H1 (cell line): ENCODE measurements at regions of chr11 and their contacts with region 1.

Region 1: DNA sequence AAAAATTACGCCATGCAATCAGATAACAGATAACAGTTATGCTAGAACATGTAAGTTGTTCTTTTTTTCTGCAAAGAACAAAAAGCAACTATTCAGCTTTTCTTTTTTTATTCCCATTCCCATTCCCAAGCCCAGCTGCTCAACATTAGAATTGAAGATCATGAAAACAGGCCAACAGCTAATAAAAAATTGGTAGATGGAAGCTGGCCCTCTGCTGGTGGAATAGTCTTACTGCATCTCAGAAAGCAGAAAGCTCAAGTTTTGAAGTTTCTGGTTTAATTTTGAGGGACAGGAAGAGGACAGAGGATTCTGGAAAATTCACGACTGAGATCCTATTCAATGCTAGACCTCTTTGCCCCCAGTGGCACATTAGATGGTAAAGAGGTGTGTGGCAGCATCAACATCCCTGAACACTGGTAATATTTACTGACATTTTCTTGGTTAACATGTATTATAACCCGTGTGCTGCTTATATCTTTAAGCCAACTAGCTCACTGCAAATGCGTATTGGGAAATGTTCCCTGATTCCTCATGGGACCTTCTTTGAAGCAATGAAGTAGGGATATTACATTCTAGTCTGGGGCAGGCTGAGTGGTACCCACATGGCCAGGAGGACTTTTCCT is 591.2 kb downstream of the OPCML start:
- DNase-seq: no peak
- H3K4me3 ChIP-seq: no peak overlapping the region
- H3K27ac ChIP-seq: no peak overlapping the region
- H3K4me1 ChIP-seq: peaks cover 3 to 7% (median 4%) of the 10 kb centered on the region in 4 experiments; a peak in 6 of 7 replicates
- H3K27me3 ChIP-seq: peaks cover 0 to 33% (median 26%) of the 10 kb centered on the region in 4 experiments; a peak in 6 of 7 replicates
- CTCF ChIP-seq: peak in 2 of 3 experiments; percentile 70 to 71; a peak in 3 of 4 replicates
- EP300 ChIP-seq: no peak
- POLR2A ChIP-seq: no peak
- RAD21 ChIP-seq: peak; percentile 76 to 84

Region 2: GRCh38 chr11:132901638-132902546 is 39.2 kb before region 1 on chr11:
- CTCF ChIA-PET with region 1: interaction called, 18 read pairs
- POLR2A ChIA-PET with region 1: no interaction called
- DNase-seq: no peak
- H3K4me3 ChIP-seq: no peak overlapping the region
- H3K27ac ChIP-seq: no peak overlapping the region
- H3K4me1 ChIP-seq: peaks cover 2 to 14% (median 9%) of the 10 kb centered on the region in 4 experiments; a peak in 6 of 7 replicates
- H3K27me3 ChIP-seq: no peaks in the 10 kb centered on the region
- CTCF ChIP-seq: no peak
- EP300 ChIP-seq: no peak
- POLR2A ChIP-seq: no peak
- RAD21 ChIP-seq: no peak

Region 3: GRCh38 chr11:132962041-132962440 is 20.9 kb after region 1 on chr11:
- CTCF ChIA-PET with region 1: interaction called, 20 read pairs
- POLR2A ChIA-PET with region 1: no interaction called
- DNase-seq: no peak
- H3K4me3 ChIP-seq: no peak overlapping the region
- H3K27ac ChIP-seq: no peak overlapping the region
- H3K4me1 ChIP-seq: peaks cover 1 to 12% (median 5%) of the 10 kb centered on the region in 4 experiments; a peak in 5 of 7 replicates
- H3K27me3 ChIP-seq: no peaks in the 10 kb centered on the region; a peak in 1 of 7 replicates
- CTCF ChIP-seq: no peak
- EP300 ChIP-seq: no peak
- POLR2A ChIP-seq: no peak
- RAD21 ChIP-seq: no peak

Region 4: DNA sequence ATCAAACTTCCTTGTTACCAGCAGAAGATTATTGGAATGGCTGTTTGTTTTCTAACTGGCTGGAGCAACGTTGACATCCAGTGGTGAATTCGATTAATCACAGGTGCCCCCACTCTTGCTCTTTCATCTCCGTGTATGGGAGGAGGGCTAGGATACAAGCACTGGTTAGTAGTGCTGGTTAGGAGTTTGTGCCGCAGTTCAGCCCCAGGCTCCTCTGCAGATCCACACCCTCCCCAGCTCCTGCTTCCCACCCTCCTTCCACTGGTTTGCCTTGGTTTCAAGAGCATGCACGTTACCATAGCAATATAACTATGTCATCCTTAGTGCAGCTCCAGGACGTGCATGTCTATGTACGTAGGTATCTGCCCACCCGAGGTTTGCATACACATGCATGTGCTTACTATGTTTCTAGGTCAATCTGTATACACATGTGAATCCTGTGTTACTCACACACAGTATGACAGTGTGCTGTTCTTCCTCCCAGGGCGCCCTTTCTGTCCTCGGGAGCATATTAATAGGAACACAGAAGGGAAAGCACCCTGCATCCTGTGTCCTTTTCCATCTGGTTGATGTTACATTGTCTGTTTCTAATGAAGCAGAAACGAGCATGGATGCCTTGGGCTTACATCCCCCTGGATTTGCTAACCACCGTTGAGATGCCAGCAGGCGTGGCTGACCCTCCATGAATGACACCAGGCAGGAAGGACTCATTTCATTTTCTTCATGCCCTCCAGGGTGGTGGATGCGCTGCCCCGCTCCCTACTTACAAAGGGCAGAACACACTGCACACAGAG is 51.9 kb after region 1 on chr11:
- CTCF ChIA-PET with region 1: interaction called, 12 read pairs
- POLR2A ChIA-PET with region 1: no interaction called
- DNase-seq: no peak
- H3K4me3 ChIP-seq: no peak overlapping the region
- H3K27ac ChIP-seq: no peak overlapping the region
- H3K4me1 ChIP-seq: peaks cover 0 to 8% (median 4%) of the 10 kb centered on the region in 4 experiments; a peak in 3 of 7 replicates
- H3K27me3 ChIP-seq: peaks cover 5 to 35% (median 30%) of the 10 kb centered on the region in 4 experiments
- CTCF ChIP-seq: peak in 2 of 3 experiments; percentile 42 to 52; a peak in 2 of 4 replicates
- EP300 ChIP-seq: no peak
- POLR2A ChIP-seq: no peak
- RAD21 ChIP-seq: peak; percentile 72 to 81

Region 5: GRCh38 chr11:133064152-133064877 is 123.2 kb after region 1 on chr11:
- CTCF ChIA-PET with region 1: interaction called, 131 read pairs
- POLR2A ChIA-PET with region 1: no interaction called
- DNase-seq: peak; percentile 67 to 88
- H3K4me3 ChIP-seq: peak overlapping the region; percentile 55 to 64 (median 61)
- H3K27ac ChIP-seq: no peak overlapping the region
- H3K4me1 ChIP-seq: peaks cover under 1 to 6% (median 3%) of the 10 kb centered on the region in 4 experiments; a peak in 6 of 7 replicates
- H3K27me3 ChIP-seq: peaks cover 0 to 4% (median 0%) of the 10 kb centered on the region in 4 experiments; a peak in 1 of 7 replicates
- CTCF ChIP-seq: peak; percentile 81 to 88 (median 83)
- EP300 ChIP-seq: no peak
- POLR2A ChIP-seq: no peak; a peak in 1 of 3 replicates
- RAD21 ChIP-seq: peak; percentile 93 to 95

Region 6: DNA sequence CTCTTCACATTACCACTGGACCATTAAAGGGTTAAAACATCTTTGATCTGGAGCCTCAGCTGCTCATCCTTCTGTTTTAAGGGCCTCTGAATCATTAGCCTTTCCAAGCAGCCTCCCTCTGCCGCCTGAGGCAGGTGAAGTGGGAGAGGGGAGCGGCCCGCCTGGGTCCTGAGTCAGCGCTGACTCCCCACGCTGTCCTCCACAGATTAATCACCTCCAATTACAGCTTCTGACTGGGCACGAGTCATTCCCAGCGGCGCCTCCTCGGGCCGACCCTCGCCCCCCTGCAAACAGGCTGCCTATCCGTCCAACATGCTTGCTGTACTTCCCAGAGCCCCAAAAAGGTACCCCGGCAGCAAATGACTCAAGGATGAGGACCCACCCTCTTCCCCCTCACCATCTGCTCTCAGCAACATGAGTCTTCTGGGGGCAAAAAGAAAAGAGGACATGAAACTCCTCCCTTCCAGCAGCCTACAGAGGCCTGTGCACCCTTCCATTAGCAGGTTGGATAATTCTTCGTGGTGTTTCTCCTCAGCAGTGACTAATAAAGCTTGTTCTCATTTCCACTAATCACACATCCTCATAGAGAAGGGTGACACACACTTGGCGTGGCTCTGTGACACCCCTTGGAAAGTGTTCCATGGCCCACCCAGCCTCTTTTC is 1083.4 kb after region 1 on chr11:
- CTCF ChIA-PET with region 1: no interaction called
- POLR2A ChIA-PET with region 1: no interaction called
- DNase-seq: no peak
- H3K4me3 ChIP-seq: no peak overlapping the region
- H3K27ac ChIP-seq: no peak overlapping the region
- H3K4me1 ChIP-seq: peaks cover 0 to 9% (median 2%) of the 10 kb centered on the region in 4 experiments; a peak in 3 of 7 replicates
- H3K27me3 ChIP-seq: no peaks in the 10 kb centered on the region
- CTCF ChIP-seq: no peak
- EP300 ChIP-seq: no peak
- POLR2A ChIP-seq: no peak
- RAD21 ChIP-seq: no peak